ENCODE measurements at regions of chr1 and their contacts with region 1.

Region 1: GRCh38 chr1:185398599-185398998 is 81.6 kb upstream of the IVNS1ABP start:
- DNase-seq: no peak
- ATAC-seq: no peak
- H3K4me3 ChIP-seq: no peak overlapping the region
- H3K4me3 Mint-ChIP-seq: no peak overlapping the region
- H3K27ac ChIP-seq: no peak overlapping the region
- H3K27ac Mint-ChIP-seq: no peak overlapping the region
- H3K4me1 ChIP-seq: peaks cover 8% of the 10 kb centered on the region
- H3K4me1 Mint-ChIP-seq: peaks cover 19% of the 10 kb centered on the region in 2 donors
- H3K27me3 ChIP-seq: no peaks in the 10 kb centered on the region
- H3K27me3 Mint-ChIP-seq: no peaks in the 10 kb centered on the region
- CTCF ChIP-seq: no peak

Region 2: DNA sequence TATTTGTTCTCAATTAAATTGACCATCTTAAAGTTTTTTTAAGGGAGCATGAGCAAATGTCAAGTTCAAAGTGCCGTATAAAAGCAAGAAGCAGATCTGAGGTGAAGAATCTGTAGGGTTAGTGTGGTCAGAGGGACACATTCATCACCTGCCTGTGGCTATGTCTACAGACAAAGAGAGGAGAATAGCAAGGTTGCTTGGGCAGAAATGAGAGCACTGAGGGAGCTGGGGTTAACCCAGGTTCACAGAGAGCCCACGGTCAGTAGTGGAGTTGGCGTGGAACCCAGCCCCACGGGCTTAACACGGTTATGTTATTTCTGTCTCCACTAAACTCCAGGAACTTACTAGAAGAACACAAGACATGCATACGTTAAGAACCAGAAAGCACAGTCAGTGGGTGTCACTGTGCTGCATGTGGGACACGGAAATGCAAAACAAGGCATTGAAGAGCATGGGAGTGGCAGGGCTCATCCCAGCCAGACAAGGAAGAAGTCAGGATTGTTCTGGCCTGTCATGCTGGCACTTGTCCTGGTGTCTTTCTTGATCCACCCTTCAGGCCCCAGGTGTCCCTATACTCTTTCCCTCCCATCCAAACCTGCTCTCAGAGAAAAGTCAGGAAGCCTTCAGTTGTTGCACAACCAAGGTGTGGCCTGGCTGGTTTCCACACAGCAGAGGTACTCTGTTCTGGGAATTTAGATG is 13.9 kb after region 1 on chr1:
- intact Hi-C with region 1: loop called (anchors 2 kb)
- DNase-seq: no peak
- ATAC-seq: peak; percentile 63 to 82 (median 79)
- H3K4me3 ChIP-seq: no peak overlapping the region
- H3K4me3 Mint-ChIP-seq: peak overlapping the region; percentile 36
- H3K27ac ChIP-seq: peak overlapping the region; percentile 40
- H3K27ac Mint-ChIP-seq: peak overlapping the region; percentile 74 to 83
- H3K4me1 ChIP-seq: peaks cover 19% of the 10 kb centered on the region
- H3K4me1 Mint-ChIP-seq: peaks cover 24 to 59% of the 10 kb centered on the region in 2 donors
- H3K27me3 ChIP-seq: no peaks in the 10 kb centered on the region
- H3K27me3 Mint-ChIP-seq: no peaks in the 10 kb centered on the region
- CTCF ChIP-seq: no peak

Measured in natural killer cell (primary cell).